Kidney (tissue), 22 donors: ENCODE measurements at regions of chr19 and their contacts with region 1.

Region 1: GRCh38 chr19:12974301-12975220 is 5.2 kb downstream of the DAND5 start:
- DNase-seq: no peak
- H3K4me3 ChIP-seq: no peak overlapping the region
- H3K27ac ChIP-seq: no peak overlapping the region
- H3K4me1 ChIP-seq: peaks cover 0 to 2% (median 0%) of the 10 kb centered on the region in 3 donors
- H3K27me3 ChIP-seq: no peaks in the 10 kb centered on the region
- CTCF ChIP-seq: no peak

Region 2: GRCh38 chr19:13060964-13061927 is 86.7 kb after region 1 on chr19:
- intact Hi-C with region 1: loop called (anchors 10 kb)
- DNase-seq: peak; percentile 84 to 93 (median 90)
- H3K4me3 ChIP-seq: peak overlapping the region; percentile 24 to 67 (median 41)
- H3K27ac ChIP-seq: no peak overlapping the region
- H3K4me1 ChIP-seq: peaks cover 0 to 22% (median 5%) of the 10 kb centered on the region in 3 donors
- H3K27me3 ChIP-seq: peaks cover 6% of the 10 kb centered on the region
- CTCF ChIP-seq: peak; percentile 96

Region 3: GRCh38 chr19:13099073-13099999 is 124.8 kb after region 1 on chr19:
- intact Hi-C with region 1: loop called (anchors 5 kb)
- DNase-seq: peak in 3 of 5 donors; percentile 65 to 94 (median 74)
- H3K4me3 ChIP-seq: no peak overlapping the region
- H3K27ac ChIP-seq: peak overlapping the region; percentile 67 to 89
- H3K4me1 ChIP-seq: peaks cover 0 to 28% (median 4%) of the 10 kb centered on the region in 3 donors
- H3K27me3 ChIP-seq: peaks cover 15% of the 10 kb centered on the region
- CTCF ChIP-seq: no peak